Transverse colon (tissue), 4 donors: ENCODE measurements at regions of chr1 and their contacts with region 1.

Region 1: DNA sequence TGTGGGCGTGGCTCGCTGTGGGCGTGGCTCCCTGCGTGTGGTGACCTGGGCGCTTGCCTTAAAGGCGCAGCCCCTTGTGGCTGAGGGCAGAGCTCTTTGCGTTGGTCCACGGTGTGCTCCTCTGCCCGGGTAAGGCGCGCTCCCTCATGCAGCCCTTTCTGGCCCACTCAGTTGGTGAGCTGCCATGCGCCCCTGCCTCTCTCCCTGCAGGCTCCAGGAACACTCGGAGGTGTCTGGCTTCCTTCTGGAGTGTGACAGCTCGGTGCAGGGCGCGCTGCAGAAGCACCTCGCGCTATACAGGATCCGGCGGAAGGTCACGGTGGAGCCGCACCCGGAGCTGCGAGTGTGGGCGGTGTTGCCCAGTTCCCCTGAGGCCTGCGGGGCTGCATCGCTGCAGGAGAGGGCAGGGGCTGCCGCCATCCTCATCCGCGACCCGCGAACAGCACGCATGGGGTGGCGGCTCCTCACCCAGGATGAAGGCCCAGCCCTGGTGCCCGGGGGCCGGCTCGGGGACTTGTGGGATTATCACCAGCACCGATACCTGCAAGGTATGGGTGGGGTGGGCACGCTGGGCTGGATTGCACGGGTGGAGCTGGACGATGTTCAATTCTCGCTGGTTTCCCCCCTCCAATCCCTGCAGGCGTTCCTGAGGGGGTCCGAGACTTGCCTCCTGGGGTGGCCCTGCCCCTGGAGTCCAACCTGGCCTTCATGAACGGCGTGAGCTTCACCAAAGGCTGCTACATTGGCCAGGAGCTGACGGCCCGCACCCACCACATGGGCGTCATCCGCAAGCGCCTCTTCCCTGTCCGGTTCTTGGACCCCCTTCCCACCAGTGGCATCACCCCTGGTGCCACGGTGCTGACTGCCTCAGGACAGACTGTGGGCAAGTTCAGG is 9.1 kb downstream of the IBA57 start:
- DNase-seq: no peak
- H3K4me3 ChIP-seq: peak overlapping the region in 2 of 4 donors; percentile 10 to 26
- H3K27ac ChIP-seq: peak overlapping the region in 1 of 4 donors; percentile 35
- H3K4me1 ChIP-seq: peaks cover 0 to 13% (median 2%) of the 10 kb centered on the region in 4 donors
- H3K27me3 ChIP-seq: no peaks in the 10 kb centered on the region
- CTCF ChIP-seq: no peak
- EP300 ChIP-seq: no peak
- POLR2A ChIP-seq: no peak

Region 2: GRCh38 chr1:228120857-228121489 is 53.8 kb before region 1 on chr1:
- in situ Hi-C with region 1: loop called in 1 of 4 experiments (anchors 10 kb)
- intact Hi-C with region 1: no loop called
- DNase-seq: no peak
- H3K4me3 ChIP-seq: no peak overlapping the region
- H3K27ac ChIP-seq: no peak overlapping the region
- H3K4me1 ChIP-seq: no peaks in the 10 kb centered on the region
- H3K27me3 ChIP-seq: no peaks in the 10 kb centered on the region
- CTCF ChIP-seq: no peak
- EP300 ChIP-seq: no peak
- POLR2A ChIP-seq: no peak

Region 3: DNA sequence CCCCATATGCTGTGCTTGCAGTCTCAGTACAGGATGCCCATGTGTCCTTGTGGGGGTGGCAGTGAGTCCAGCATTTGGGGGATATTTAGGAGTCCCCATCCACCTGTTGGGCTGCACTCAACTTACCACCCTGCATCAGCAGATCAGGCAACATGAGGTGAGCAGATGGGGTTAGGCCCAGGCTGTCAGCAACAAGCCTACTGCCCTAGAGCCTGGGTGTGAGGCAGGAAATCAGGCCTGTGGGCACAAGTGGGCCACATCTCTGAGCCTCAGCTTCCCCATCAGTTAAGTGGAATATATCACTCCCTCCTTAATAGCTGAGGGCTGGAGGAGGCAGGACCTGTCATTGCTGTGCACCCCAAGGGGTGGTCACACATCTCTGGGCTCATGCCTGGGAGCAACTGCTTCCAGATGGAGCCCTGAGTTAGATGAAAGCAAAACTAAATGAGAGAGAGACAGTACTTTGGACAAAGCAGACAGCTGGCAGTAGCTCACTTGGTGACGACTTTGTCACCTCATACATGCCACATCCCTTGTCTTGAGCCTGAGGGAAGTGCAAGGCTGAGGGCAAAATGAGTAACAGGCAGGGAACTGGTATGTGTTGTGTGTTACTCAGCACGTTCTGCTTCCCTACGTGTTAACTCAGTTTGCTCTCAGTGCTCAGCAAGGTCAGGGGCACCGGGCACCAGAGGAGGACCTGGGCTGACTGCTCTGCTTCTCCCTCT is 183.5 kb after region 1 on chr1:
- in situ Hi-C with region 1: no loop called
- intact Hi-C with region 1: no loop called
- DNase-seq: no peak
- H3K4me3 ChIP-seq: no peak overlapping the region
- H3K27ac ChIP-seq: no peak overlapping the region
- H3K4me1 ChIP-seq: no peaks in the 10 kb centered on the region
- H3K27me3 ChIP-seq: no peaks in the 10 kb centered on the region
- CTCF ChIP-seq: no peak
- EP300 ChIP-seq: no peak
- POLR2A ChIP-seq: no peak